GM10248 (cell line): ENCODE measurements at regions of chr2 and their contacts with region 1.

Region 1: GRCh38 chr2:22904126-22904684 is 480.8 kb upstream of the KLHL29 start:
- DNase-seq: peak; percentile 22
- CTCF ChIP-seq: peak; percentile 12

Region 2: GRCh38 chr2:22879009-22879863 is 25.0 kb before region 1 on chr2:
- CTCF ChIA-PET with region 1: no interaction called
- POLR2A ChIA-PET with region 1: no interaction called
- DNase-seq: no peak
- CTCF ChIP-seq: no peak

Region 3: GRCh38 chr2:22893761-22894517 is 10.3 kb before region 1 on chr2:
- CTCF ChIA-PET with region 1: interaction called, 13 read pairs
- POLR2A ChIA-PET with region 1: no interaction called
- DNase-seq: no peak
- CTCF ChIP-seq: no peak

Region 4: GRCh38 chr2:22934747-22935146 is 30.5 kb after region 1 on chr2:
- CTCF ChIA-PET with region 1: no interaction called
- POLR2A ChIA-PET with region 1: no interaction called
- DNase-seq: no peak
- CTCF ChIP-seq: no peak

Region 5: GRCh38 chr2:23028106-23028505 is 123.9 kb after region 1 on chr2:
- CTCF ChIA-PET with region 1: no interaction called
- POLR2A ChIA-PET with region 1: no interaction called
- DNase-seq: no peak
- CTCF ChIP-seq: no peak